CD8-positive, alpha-beta T cell (primary cell): ENCODE measurements at regions of chr1 and their contacts with region 1.

Region 1: GRCh38 chr1:91523482-91523881 is 22.8 kb downstream of the CDC7 start:
- DNase-seq: peak in 1 of 9 experiments; percentile 43
- ATAC-seq: peak; percentile 26
- H3K4me3 ChIP-seq: no peak overlapping the region
- H3K4me3 Mint-ChIP-seq: no peak overlapping the region
- H3K27ac ChIP-seq: peak overlapping the region in 1 of 2 experiments; percentile 37
- H3K27ac Mint-ChIP-seq: peak overlapping the region; percentile 62
- H3K4me1 ChIP-seq: peaks cover 5% of the 10 kb centered on the region
- H3K4me1 Mint-ChIP-seq: peaks cover 8% of the 10 kb centered on the region
- H3K27me3 ChIP-seq: no peaks in the 10 kb centered on the region
- H3K27me3 Mint-ChIP-seq: no peaks in the 10 kb centered on the region
- CTCF ChIP-seq: no peak

Region 2: GRCh38 chr1:91555821-91556531 is 32.5 kb after region 1 on chr1:
- CTCF ChIA-PET with region 1: no interaction called
- POLR2A ChIA-PET with region 1: no interaction called
- intact Hi-C with region 1: loop called in 1 of 2 experiments (anchors 5 kb)
- DNase-seq: peak; percentile 29 to 96 (median 59)
- ATAC-seq: peak; percentile 87
- H3K4me3 ChIP-seq: no peak overlapping the region
- H3K4me3 Mint-ChIP-seq: no peak overlapping the region
- H3K27ac ChIP-seq: peak overlapping the region; percentile 49 to 90
- H3K27ac Mint-ChIP-seq: peak overlapping the region; percentile 92
- H3K4me1 ChIP-seq: peaks cover 54% of the 10 kb centered on the region
- H3K4me1 Mint-ChIP-seq: peaks cover 82% of the 10 kb centered on the region
- H3K27me3 ChIP-seq: no peaks in the 10 kb centered on the region
- H3K27me3 Mint-ChIP-seq: no peaks in the 10 kb centered on the region
- CTCF ChIP-seq: no peak